ENCODE measurements at regions of chr12 and their contacts with region 1.

Region 1: DNA sequence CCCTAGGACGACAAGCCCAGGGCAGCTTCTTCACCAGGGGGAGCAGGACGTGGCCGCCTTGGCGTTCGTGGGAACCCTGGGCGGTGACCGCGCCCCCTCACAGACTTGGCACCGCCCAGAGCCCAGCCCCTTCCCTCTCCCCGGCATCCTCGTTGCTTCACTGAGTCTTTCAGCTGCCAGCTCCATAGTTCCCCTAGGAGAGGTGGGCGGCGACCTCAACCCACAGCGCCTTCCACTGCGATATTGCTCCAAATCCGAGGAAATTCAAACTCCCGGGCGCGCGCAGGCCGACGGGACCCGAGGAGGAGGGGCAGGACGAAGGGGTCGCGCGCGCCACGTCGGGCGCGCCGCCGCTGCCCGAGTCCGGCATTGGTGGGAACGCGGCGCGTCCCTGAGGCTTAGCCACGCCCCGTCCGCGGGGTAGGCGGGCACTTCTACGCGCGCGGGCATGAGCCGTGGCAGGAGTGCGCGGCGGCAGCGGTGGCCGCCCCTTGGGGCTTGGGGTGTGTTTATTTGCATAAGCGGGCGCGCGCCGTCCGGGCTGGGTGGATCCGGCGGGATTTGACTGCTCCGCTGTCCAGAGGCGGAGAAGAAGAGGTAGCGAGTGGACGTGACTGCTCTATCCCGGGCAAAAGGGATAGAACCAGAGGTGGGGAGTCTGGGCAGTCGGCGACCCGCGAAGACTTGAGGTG is at the starts of genes APAF1 and IKBIP:
- DNase-seq: peak; percentile 94 to 99 (median 97)
- ATAC-seq: peak; percentile 89
- H3K4me3 ChIP-seq: peak within 1 kb of the TSS; percentile 93 to 99
- H3K4me3 Mint-ChIP-seq: peak within 1 kb of the TSS; percentile 99
- H3K27ac ChIP-seq: peak within 1 kb of the TSS; percentile 60 to 90
- H3K27ac Mint-ChIP-seq: peak within 1 kb of the TSS; percentile 94
- H3K4me1 ChIP-seq: peaks cover 14% of the 10 kb centered on the region
- H3K4me1 Mint-ChIP-seq: peaks cover 44% of the 10 kb centered on the region
- H3K27me3 ChIP-seq: no peaks in the 10 kb centered on the region
- H3K27me3 Mint-ChIP-seq: no peaks in the 10 kb centered on the region
- CTCF ChIP-seq: no peak
- total RNA-seq, gene APAF1: 10.5 to 11.9 TPM
- total RNA-seq, gene IKBIP: 1.4 to 1.9 TPM

Region 2: DNA sequence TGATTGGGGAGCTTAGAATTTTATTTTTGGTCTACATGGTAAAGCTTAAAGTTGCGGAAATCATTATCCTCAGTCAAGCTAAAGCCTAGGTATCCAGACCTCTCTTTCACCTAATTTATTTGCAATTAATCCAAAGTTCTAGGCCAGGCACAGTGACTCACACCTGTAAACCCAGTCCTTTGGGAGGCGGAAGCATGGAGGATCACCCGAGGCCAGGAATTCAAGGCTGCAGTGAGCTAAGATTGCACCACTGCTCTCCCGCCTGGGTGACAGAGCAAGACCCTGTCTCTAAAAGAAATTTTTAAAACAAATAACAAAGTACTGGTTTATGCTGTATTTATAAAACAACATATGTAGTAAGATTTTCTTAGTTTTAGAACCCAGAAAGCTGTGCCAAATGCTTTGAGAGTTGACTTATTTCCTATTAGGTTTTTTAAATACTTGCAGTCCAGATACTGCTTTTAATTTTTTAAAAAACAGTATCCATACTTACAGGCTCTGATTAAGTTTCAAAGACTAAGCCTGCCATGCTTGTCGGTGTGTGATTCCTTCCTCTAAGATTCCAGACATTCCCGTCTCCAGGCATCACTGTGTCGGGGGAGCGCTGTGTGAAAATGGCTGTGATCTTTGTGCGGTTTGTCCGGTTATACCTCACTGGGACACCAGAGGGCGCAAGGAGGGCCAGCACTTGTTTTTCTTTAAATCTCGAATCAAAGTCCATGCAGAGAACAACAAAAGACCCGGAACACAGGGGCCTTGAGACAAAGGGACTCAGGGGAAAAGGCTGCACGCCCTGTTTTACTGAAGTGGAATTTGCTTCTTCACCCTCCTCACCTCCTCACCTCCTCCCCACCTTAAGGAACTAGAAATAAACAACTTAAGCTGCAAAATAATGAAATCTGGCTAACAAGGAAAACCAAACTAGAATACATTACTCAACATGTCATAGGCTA is 154.1 kb before region 1 on chr12:
- CTCF ChIA-PET with region 1: no interaction called
- POLR2A ChIA-PET with region 1: no interaction called
- intact Hi-C with region 1: no loop called
- DNase-seq: peak; percentile 60 to 90 (median 86)
- ATAC-seq: peak; percentile 99
- H3K4me3 ChIP-seq: no peak overlapping the region
- H3K4me3 Mint-ChIP-seq: peak overlapping the region; percentile 65
- H3K27ac ChIP-seq: peak overlapping the region in 1 of 2 experiments; percentile 51
- H3K27ac Mint-ChIP-seq: peak overlapping the region; percentile 93
- H3K4me1 ChIP-seq: peaks cover 8% of the 10 kb centered on the region
- H3K4me1 Mint-ChIP-seq: peaks cover 7% of the 10 kb centered on the region
- H3K27me3 ChIP-seq: no peaks in the 10 kb centered on the region
- H3K27me3 Mint-ChIP-seq: no peaks in the 10 kb centered on the region
- CTCF ChIP-seq: peak; percentile 84

Region 3: GRCh38 chr12:98503592-98504367 is 141.1 kb before region 1 on chr12:
- CTCF ChIA-PET with region 1: no interaction called
- POLR2A ChIA-PET with region 1: no interaction called
- intact Hi-C with region 1: loop called (anchors 1 to 2 kb)
- DNase-seq: peak; percentile 89 to 97 (median 94)
- ATAC-seq: peak; percentile 89
- H3K4me3 ChIP-seq: peak overlapping the region; percentile 89 to 96
- H3K4me3 Mint-ChIP-seq: peak overlapping the region; percentile 99
- H3K27ac ChIP-seq: peak overlapping the region; percentile 91 to 99
- H3K27ac Mint-ChIP-seq: peak overlapping the region; percentile 99
- H3K4me1 ChIP-seq: peaks cover 3% of the 10 kb centered on the region
- H3K4me1 Mint-ChIP-seq: peaks cover 20% of the 10 kb centered on the region
- H3K27me3 ChIP-seq: no peaks in the 10 kb centered on the region
- H3K27me3 Mint-ChIP-seq: no peaks in the 10 kb centered on the region
- CTCF ChIP-seq: no peak

Region 4: GRCh38 chr12:98578821-98579220 is 66.0 kb before region 1 on chr12:
- CTCF ChIA-PET with region 1: no interaction called
- POLR2A ChIA-PET with region 1: no interaction called
- intact Hi-C with region 1: no loop called
- DNase-seq: no peak
- ATAC-seq: no peak
- H3K4me3 ChIP-seq: no peak overlapping the region
- H3K4me3 Mint-ChIP-seq: no peak overlapping the region
- H3K27ac ChIP-seq: no peak overlapping the region
- H3K27ac Mint-ChIP-seq: no peak overlapping the region
- H3K4me1 ChIP-seq: no peaks in the 10 kb centered on the region
- H3K4me1 Mint-ChIP-seq: no peaks in the 10 kb centered on the region
- H3K27me3 ChIP-seq: no peaks in the 10 kb centered on the region
- H3K27me3 Mint-ChIP-seq: no peaks in the 10 kb centered on the region
- CTCF ChIP-seq: no peak

Measured in CD8-positive, alpha-beta T cell (primary cell).